ENCODE measurements at regions of chr4 and their contacts with region 1.

Region 1: DNA sequence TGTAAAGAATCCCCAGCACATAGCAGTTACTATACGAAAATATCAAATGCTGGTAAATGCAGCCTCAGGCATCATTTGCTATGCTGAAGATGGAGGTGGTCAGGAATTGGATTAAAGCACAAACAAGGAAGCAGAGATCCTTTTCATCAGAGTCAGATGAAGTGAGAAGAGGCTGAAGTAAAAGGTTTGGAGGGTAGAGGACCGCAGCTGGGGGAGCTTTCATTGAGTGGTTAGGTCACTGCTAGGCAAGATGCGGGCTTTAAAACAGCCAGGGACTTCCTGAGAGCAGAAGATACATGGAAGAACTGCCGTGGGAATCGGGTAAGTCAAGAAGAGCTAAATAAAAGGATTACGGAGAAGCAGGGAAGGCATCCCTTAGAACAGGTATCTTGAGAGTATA is 351.4 kb downstream of the UNC5C start:
- DNase-seq: no peak
- ATAC-seq: no peak
- H3K4me3 Mint-ChIP-seq: no peak overlapping the region
- H3K27ac Mint-ChIP-seq: no peak overlapping the region
- H3K4me1 Mint-ChIP-seq: peaks cover 2% of the 10 kb centered on the region; the same call in 1 of the 2 replicates
- H3K27me3 Mint-ChIP-seq: no peaks in the 10 kb centered on the region; the same call in 1 of the 2 replicates
- CTCF ChIP-seq: no peak

Region 2: DNA sequence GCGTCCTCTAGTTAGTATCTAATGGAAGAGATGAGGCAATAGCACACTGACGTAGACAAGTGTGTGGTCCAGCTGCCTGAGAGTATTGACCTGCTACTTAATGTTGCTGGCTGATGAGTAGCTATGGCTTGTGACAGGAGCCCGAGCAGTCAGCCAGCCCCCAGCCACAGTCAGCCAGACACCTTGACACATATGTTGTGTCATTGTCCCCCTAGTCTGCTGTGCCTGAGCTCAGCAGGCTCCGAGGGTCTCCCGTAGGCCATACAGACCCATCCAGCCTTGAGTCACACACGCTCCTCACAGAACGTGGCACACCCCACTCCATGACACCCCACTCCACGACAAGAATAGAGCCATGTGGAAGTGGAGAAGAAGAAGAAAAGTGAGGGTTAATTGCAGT is 10.7 kb before region 1 on chr4:
- CTCF ChIA-PET with region 1: interaction called, 10 read pairs
- POLR2A ChIA-PET with region 1: no interaction called
- DNase-seq: no peak
- ATAC-seq: no peak
- H3K4me3 Mint-ChIP-seq: no peak overlapping the region
- H3K27ac Mint-ChIP-seq: no peak overlapping the region; the same call in 1 of the 2 replicates
- H3K4me1 Mint-ChIP-seq: peaks cover 10% of the 10 kb centered on the region
- H3K27me3 Mint-ChIP-seq: no peaks in the 10 kb centered on the region
- CTCF ChIP-seq: no peak

Measured in WTC11 (cell line).